GM12878 (cell line): ENCODE measurements at regions of chr3 and their contacts with region 1.

Region 1: DNA sequence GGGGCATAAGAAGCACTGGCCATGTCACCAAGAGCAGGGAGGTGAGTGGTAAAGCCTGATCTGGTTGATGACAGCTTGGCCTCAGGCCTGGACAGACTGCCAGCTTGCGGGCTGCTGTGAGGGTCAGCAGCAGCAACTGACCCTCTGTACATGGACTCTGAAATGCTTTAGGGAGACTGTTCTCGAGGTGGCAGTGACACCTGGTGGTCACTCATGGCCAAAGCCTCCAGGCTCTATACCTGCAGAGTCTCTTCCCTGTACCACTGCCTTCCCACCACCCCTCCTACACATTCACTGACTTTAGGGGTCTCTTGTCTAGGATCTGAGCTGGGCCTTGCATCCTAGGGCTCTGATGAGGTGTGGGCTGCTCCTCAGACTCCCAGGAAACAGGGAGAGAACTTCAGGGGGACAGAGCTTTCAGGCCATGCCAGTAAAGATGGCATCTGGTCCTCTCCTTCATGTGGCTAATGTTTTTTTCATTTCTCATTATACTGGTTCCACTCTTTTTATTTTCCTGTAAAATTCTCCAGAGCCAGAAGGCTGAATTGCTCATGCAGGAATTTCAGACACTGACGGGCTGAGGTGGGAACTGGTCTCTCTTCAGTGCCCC is 17.2 kb upstream of the TIMP4 start:
- DNase-seq: no peak
- ATAC-seq: peak; percentile 100
- H3K4me3 ChIP-seq: no peak overlapping the region
- H3K27ac ChIP-seq: no peak overlapping the region
- H3K4me1 ChIP-seq: no peaks in the 10 kb centered on the region; the same call in 1 of the 2 replicates
- H3K27me3 ChIP-seq: no peaks in the 10 kb centered on the region
- CTCF ChIP-seq: peak; percentile 72 to 83 (median 82)
- EP300 ChIP-seq: no peak
- POLR2A ChIP-seq: no peak
- RAD21 ChIP-seq: peak; percentile 72

Region 2: GRCh38 chr3:12120374-12121140 is 55.4 kb before region 1 on chr3:
- CTCF ChIA-PET with region 1: interaction called, 10 read pairs
- POLR2A ChIA-PET with region 1: no interaction called
- RAD21 ChIA-PET with region 1: no interaction called
- SMC1A ChIA-PET with region 1: no interaction called
- in situ Hi-C with region 1: no loop called
- intact Hi-C with region 1: no loop called
- DNase-seq: no peak
- ATAC-seq: peak; percentile 14; the same call in 2 of the 3 replicates
- H3K4me3 ChIP-seq: no peak overlapping the region
- H3K27ac ChIP-seq: no peak overlapping the region
- H3K4me1 ChIP-seq: no peaks in the 10 kb centered on the region
- H3K27me3 ChIP-seq: 0 out of 4 replicates have a peak, but pooled peaks cover 0 to 6% of the 10 kb centered on the region in 2 experiments
- CTCF ChIP-seq: no peak
- EP300 ChIP-seq: no peak
- POLR2A ChIP-seq: no peak
- RAD21 ChIP-seq: no peak

Region 3: DNA sequence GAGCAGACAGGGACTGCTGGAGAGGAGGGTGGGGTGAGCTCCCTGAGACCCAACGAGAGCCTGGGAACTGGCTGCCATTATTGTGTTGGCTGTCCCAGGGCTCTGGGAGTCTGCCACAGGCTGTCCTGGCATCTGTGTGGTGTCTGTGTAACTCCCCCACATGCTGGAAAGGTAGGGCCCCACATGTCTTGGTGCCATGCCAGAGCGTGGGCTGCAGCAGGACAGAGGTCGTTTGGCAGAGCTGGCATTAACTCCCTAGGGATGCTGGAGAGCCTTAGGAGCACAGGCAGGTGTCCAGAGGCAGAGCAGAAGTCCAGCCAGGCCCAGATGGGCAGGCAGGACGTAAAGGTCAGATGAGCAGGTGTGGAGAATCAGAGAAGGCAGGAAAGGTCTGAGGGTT is 26.9 kb before region 1 on chr3:
- CTCF ChIA-PET with region 1: interaction called, 29 read pairs
- POLR2A ChIA-PET with region 1: no interaction called
- RAD21 ChIA-PET with region 1: interaction called, 6 read pairs
- SMC1A ChIA-PET with region 1: interaction called, 15 read pairs
- in situ Hi-C with region 1: no loop called
- intact Hi-C with region 1: no loop called
- DNase-seq: no peak
- ATAC-seq: no peak
- H3K4me3 ChIP-seq: no peak overlapping the region
- H3K27ac ChIP-seq: no peak overlapping the region
- H3K4me1 ChIP-seq: no peaks in the 10 kb centered on the region
- H3K27me3 ChIP-seq: no peaks in the 10 kb centered on the region; a peak in 2 of 4 replicates
- CTCF ChIP-seq: no peak
- EP300 ChIP-seq: no peak
- POLR2A ChIP-seq: no peak
- RAD21 ChIP-seq: no peak

Region 4: GRCh38 chr3:12187448-12188327 is 11.7 kb after region 1 on chr3:
- CTCF ChIA-PET with region 1: interaction called, 68 read pairs
- POLR2A ChIA-PET with region 1: interaction called, 4 read pairs
- RAD21 ChIA-PET with region 1: interaction called, 16 read pairs
- SMC1A ChIA-PET with region 1: interaction called, 83 read pairs
- in situ Hi-C with region 1: no loop called
- intact Hi-C with region 1: no loop called
- DNase-seq: peak; percentile 61
- ATAC-seq: peak; percentile 92
- H3K4me3 ChIP-seq: no peak overlapping the region
- H3K27ac ChIP-seq: peak overlapping the region; percentile 47
- H3K4me1 ChIP-seq: peaks cover 20% of the 10 kb centered on the region
- H3K27me3 ChIP-seq: no peaks in the 10 kb centered on the region
- CTCF ChIP-seq: no peak
- EP300 ChIP-seq: peak; percentile 32 to 60; a peak in 2 of 4 replicates
- POLR2A ChIP-seq: no peak
- RAD21 ChIP-seq: no peak

Region 5: DNA sequence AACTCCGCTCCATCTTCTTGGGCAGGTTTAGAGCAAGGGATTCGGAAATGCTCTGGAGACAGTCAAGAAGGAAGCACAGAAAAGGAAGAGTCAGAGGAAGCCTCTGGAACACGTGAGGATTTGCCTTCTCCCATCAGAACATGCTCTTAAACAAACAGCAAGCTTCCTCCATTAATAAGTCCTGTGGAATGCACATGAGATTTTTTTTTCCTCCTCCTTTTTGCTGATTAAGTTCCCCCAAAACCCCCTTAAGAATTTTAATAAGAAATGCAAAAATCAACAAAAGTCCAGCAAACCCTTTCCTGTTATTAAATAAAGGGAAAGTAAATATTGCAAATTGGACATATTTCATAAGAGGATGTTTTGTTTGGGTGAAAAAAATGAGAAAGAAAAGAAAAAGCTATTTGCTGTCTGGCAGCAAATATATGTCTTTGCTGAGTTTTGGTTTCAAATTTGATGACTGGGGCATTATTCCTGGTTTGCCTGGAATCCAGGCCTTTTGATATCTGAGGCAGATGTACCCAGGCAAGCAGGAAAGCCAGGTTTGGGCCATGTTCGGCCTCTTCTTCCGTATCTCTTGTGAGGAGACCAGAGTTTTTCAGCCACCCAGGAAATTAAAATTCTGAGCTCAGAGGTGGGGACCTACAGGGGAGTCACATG is 300.4 kb after region 1 on chr3:
- CTCF ChIA-PET with region 1: interaction called, 44 read pairs
- POLR2A ChIA-PET with region 1: interaction called, 3 read pairs
- RAD21 ChIA-PET with region 1: interaction called, 42 read pairs
- SMC1A ChIA-PET with region 1: interaction called, 31 read pairs
- in situ Hi-C with region 1: no loop called
- intact Hi-C with region 1: loop called (anchors 2 kb)
- DNase-seq: no peak
- ATAC-seq: no peak
- H3K4me3 ChIP-seq: no peak overlapping the region
- H3K27ac ChIP-seq: no peak overlapping the region
- H3K4me1 ChIP-seq: no peaks in the 10 kb centered on the region
- H3K27me3 ChIP-seq: 0 out of 4 replicates have a peak, but pooled peaks cover 0 to under 1% of the 10 kb centered on the region in 2 experiments
- CTCF ChIP-seq: no peak
- EP300 ChIP-seq: no peak
- POLR2A ChIP-seq: no peak
- RAD21 ChIP-seq: no peak